Activated B cell treated with CpG ODN at 0.5 μM for 24 hours (primary cell): ENCODE measurements at regions of chr4 and their contacts with region 1.

Region 1: GRCh38 chr4:67545199-67546003 is at the start of gene CENPC:
- DNase-seq: peak; percentile 85
- ATAC-seq: peak; percentile 93
- H3K4me3 Mint-ChIP-seq: peak within 1 kb of the TSS; percentile 96
- H3K27ac Mint-ChIP-seq: peak within 1 kb of the TSS; percentile 98
- H3K4me1 Mint-ChIP-seq: peaks cover 50% of the 10 kb centered on the region
- H3K27me3 Mint-ChIP-seq: no peaks in the 10 kb centered on the region
- CTCF ChIP-seq: no peak
- total RNA-seq, gene CENPC: 40.5 and 46.0 TPM in 2 replicates

Region 2: GRCh38 chr4:67522851-67523671 is 22.3 kb before region 1 on chr4:
- CTCF ChIA-PET with region 1: no interaction called
- POLR2A ChIA-PET with region 1: no interaction called
- intact Hi-C with region 1: loop called (anchors 2 kb)
- DNase-seq: no peak
- ATAC-seq: no peak
- H3K4me3 Mint-ChIP-seq: no peak overlapping the region
- H3K27ac Mint-ChIP-seq: no peak overlapping the region
- H3K4me1 Mint-ChIP-seq: peaks cover 37% of the 10 kb centered on the region
- H3K27me3 Mint-ChIP-seq: no peaks in the 10 kb centered on the region
- CTCF ChIP-seq: no peak

Region 3: DNA sequence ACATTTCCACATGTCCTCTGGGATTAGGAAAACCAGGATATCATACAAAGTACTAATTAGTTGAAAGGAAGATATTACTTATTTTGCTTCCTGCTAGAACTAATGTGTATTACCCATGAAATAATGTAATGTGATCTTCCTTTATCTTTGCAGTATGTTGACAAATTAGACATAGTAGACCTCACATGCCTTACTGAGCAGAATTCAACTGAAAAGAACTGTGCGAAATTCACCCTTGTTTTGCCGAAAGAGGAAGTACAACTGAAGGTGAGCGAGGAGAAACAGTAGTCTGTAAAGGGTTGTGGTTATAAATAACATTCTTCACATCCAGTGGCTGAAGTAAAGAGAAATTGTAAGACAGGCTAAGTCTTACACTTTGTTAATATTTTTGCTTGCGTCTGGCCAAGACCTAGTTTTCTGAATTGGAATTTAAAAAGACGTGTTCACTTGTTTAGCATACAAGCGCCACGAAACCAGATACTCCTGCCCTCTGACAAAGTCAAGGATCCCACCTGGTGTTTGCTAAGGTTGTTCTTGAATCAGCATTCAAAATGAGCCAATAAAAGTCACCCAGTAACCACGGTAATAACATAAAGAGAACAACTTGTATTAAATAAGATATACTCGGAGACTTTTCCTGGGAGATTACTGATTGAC is 30.0 kb after region 1 on chr4:
- CTCF ChIA-PET with region 1: interaction called, 4 read pairs
- POLR2A ChIA-PET with region 1: interaction called, 9 read pairs
- intact Hi-C with region 1: loop called (anchors 1 kb)
- DNase-seq: no peak
- ATAC-seq: peak; percentile 91
- H3K4me3 Mint-ChIP-seq: peak overlapping the region; percentile 71
- H3K27ac Mint-ChIP-seq: peak overlapping the region; percentile 90
- H3K4me1 Mint-ChIP-seq: peaks cover 68% of the 10 kb centered on the region
- H3K27me3 Mint-ChIP-seq: no peaks in the 10 kb centered on the region
- CTCF ChIP-seq: no peak

Region 4: GRCh38 chr4:67624939-67625338 is 79.5 kb after region 1 on chr4:
- CTCF ChIA-PET with region 1: interaction called, 6 read pairs
- POLR2A ChIA-PET with region 1: interaction called, 3 read pairs
- intact Hi-C with region 1: loop called (anchors 2 kb)
- DNase-seq: no peak
- ATAC-seq: no peak
- H3K4me3 Mint-ChIP-seq: no peak overlapping the region
- H3K27ac Mint-ChIP-seq: no peak overlapping the region
- H3K4me1 Mint-ChIP-seq: no peaks in the 10 kb centered on the region
- H3K27me3 Mint-ChIP-seq: no peaks in the 10 kb centered on the region
- CTCF ChIP-seq: no peak

Region 5: DNA sequence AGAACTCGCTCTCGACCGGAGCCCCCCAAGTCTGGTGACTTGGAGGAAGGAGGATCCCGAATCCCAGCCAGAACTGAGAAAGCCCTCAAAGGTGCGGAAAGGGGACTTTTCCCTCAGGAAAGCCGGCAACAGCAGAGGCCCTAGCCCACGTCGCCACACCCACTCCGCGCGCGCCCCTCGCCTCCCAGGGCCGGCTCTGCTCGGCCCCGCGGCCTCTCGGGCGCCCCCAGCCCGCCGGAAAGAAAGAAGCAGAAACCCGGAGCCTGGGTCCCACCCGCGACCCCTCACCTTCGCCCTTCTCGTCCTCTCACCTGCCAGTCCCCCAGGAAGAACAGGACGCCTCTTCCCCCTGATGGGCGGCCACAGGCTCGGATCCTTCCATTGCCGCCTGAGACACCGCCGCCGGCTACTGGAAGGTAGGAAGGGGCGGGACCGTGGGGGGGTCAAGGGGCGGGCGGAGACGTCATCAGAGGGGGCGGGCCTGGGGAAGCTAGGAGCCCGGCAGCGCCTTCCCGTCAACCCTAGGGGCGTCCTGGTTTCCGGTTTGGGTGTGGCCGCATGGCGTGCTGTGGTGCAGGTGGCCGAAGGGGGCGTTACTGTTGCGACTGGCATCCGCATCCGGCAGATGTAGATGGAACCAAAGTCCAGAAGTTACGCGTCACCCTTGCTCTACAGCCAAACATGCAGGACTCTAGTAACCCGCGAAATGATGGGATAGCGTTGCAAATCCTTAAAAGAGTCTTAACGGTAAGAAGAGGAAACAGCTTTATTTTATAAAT is 155.5 kb after region 1 on chr4 and contains the start of gene UBA6:
- CTCF ChIA-PET with region 1: interaction called, 6 read pairs
- POLR2A ChIA-PET with region 1: interaction called, 35 read pairs
- intact Hi-C with region 1: loop called (anchors 1 kb)
- DNase-seq: peak; percentile 89
- ATAC-seq: peak; percentile 95
- H3K4me3 Mint-ChIP-seq: peak within 1 kb of the TSS; percentile 92
- H3K27ac Mint-ChIP-seq: peak within 1 kb of the TSS; percentile 94
- H3K4me1 Mint-ChIP-seq: peaks cover 61% of the 10 kb centered on the region
- H3K27me3 Mint-ChIP-seq: no peaks in the 10 kb centered on the region
- CTCF ChIP-seq: no peak
- total RNA-seq, gene UBA6: 63.0 and 70.4 TPM in 2 replicates

Region 6: GRCh38 chr4:67909905-67910584 is 364.6 kb after region 1 on chr4:
- CTCF ChIA-PET with region 1: interaction called, 14 read pairs
- POLR2A ChIA-PET with region 1: no interaction called
- intact Hi-C with region 1: loop called (anchors 1 kb)
- DNase-seq: no peak
- ATAC-seq: no peak
- H3K4me3 Mint-ChIP-seq: no peak overlapping the region
- H3K27ac Mint-ChIP-seq: no peak overlapping the region
- H3K4me1 Mint-ChIP-seq: no peaks in the 10 kb centered on the region
- H3K27me3 Mint-ChIP-seq: peaks cover 13% of the 10 kb centered on the region
- CTCF ChIP-seq: peak; percentile 64

Region 7: DNA sequence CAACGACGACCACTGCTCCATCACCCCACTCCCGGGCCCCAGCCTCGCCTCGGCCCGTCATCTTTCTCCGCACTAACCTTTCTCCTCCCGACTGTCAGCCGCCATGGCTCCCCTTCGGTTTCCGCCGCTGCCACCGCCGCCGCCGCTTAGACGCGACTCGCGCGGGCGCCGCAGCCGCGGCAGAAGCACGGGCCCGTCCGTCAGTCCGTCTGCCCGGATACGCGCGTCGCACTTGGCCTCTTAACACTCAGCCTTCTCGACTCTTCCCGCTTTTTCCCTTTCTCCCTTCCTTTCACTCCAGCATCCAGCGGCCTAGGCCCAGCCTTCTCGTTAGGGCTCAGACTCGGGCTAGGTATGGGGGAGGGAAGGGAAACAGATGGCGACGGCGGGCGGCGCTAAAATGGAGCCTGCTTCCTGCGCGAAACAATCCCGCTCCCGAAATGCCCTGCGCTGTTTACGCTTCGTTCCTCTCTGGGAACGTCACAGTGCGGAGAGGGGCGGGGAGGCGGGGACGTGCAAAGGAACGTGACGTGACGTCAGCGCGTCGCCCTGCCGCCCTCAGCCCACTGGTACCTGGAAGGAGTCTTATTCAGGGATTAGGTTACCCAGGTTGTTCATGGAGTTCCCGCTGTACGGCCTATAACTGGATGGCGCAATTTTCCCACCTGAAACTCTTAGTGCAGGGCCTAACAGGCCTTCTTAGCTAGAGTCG is 804.4 kb after region 1 on chr4 and contains the start of gene YTHDC1:
- CTCF ChIA-PET with region 1: no interaction called
- POLR2A ChIA-PET with region 1: no interaction called
- intact Hi-C with region 1: loop called (anchors 1 kb)
- DNase-seq: peak; percentile 87
- ATAC-seq: peak; percentile 95
- H3K4me3 Mint-ChIP-seq: peak within 1 kb of the TSS; percentile 99
- H3K27ac Mint-ChIP-seq: peak within 1 kb of the TSS; percentile 99
- H3K4me1 Mint-ChIP-seq: peaks cover 38% of the 10 kb centered on the region
- H3K27me3 Mint-ChIP-seq: peaks cover 3% of the 10 kb centered on the region
- CTCF ChIP-seq: no peak
- total RNA-seq, gene YTHDC1: 101 and 119 TPM in 2 replicates